Activated T-helper 1 cell treated with anti-CD3 and anti-CD28 coated beads, Interleukin-12 subunit alpha, Interleukin-12 subunit beta, Interleukin-2, Interleukin-4 antibody, amounts not matched to agents 30 ng/mL and 10 ng/mL and 1 ng/mL, durations not matched to agents 14 hours and 24 hours and 36 hours (primary cell): ENCODE measurements at regions of chr9 and their contacts with region 1.

Region 1: DNA sequence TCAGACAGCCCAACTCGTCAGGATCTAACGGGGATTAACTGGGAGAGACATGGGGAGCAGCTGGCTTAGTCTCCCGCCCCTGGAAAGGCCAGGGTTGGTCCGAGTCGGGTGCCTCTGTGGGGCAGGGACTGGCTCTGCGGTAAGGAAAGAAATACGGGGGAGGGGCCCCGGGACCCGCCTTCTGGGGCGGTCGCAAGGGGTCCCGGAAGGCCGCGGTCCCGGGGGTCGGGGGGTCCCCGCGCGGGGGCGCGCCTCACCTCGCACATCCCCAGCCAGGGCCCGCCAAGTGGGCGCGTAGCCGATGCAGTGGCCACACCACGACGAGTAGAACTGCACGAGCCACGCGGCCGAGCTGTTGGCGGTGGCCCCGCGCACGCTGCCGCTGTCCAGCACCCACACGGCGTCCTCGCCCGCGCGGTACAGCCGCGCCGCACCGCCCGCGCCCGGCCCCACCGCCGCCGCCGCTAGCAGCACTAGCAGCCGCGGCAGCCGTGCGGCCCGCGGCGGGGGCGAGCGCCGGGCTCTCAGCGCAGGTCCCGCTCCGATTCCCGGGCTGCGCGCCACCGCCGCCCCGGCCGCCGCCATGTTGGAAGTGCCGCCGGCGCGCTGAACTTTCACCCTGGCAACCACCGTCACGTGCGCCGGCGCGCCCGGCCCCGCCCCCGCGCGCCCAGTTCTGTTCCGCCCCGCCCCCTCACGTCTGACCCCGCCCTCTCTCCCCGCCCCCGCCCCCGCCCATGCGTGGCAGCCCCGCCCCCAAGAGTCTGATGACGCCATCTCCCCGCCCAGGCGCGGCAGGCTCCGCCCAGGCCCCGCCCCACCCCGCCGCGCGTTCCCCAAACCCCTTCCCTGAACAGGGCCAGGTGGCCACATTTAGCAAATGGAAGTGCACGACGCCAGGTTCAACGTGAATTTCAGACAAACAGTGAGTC is at the start of gene QSOX2:
- DNase-seq: peak; percentile 77
- H3K4me3 Mint-ChIP-seq: peak within 1 kb of the TSS; percentile 96
- H3K27ac Mint-ChIP-seq: peak within 1 kb of the TSS; percentile 96
- H3K4me1 Mint-ChIP-seq: peaks cover 24% of the 10 kb centered on the region
- H3K27me3 Mint-ChIP-seq: no peaks in the 10 kb centered on the region
- total RNA-seq, gene QSOX2: 27.9 and 28.6 TPM in 2 replicates

Region 2: GRCh38 chr9:135692410-135692809 is 553.1 kb before region 1 on chr9:
- intact Hi-C with region 1: no loop called
- DNase-seq: no peak
- H3K4me3 Mint-ChIP-seq: no peak overlapping the region
- H3K27ac Mint-ChIP-seq: no peak overlapping the region
- H3K4me1 Mint-ChIP-seq: no peaks in the 10 kb centered on the region
- H3K27me3 Mint-ChIP-seq: no peaks in the 10 kb centered on the region

Region 3: DNA sequence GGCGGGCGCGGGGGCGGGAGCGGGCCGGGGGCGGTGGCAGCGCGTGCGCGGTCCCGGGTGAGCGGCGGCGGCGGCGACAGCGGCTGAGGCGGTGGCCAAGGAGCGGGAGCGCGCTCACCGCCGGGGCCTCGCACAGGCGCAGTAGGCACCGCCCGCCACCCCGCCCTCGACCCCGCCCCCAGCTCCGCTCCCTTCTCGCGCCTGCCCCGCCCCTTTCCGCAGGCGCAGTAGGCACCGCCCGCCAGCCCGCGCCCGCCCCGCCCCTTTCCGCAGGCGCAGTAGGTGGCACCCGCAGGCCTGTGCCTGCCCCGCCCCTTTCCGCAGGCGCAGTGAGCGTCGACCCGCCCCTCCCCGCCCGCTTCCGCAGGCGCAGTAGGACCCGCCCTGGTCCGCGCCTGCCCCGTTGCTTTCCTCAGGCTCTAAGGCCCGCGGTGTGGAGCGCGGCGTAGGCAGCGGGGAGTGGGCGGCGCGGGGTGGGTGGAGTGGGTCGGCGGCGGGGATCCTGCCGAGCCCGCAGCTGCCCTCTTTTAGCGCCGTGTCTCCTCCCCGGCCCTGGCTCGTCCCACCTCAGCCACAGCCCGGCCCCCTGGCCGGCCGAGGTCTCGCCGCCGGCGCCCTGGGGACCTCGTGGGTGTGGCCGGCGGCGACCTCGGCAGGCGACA is 337.9 kb before region 1 on chr9 and contains the start of gene CAMSAP1:
- intact Hi-C with region 1: loop called (anchors 5 kb)
- DNase-seq: peak; percentile 91
- H3K4me3 Mint-ChIP-seq: peak within 1 kb of the TSS; percentile 90
- H3K27ac Mint-ChIP-seq: peak within 1 kb of the TSS; percentile 89
- H3K4me1 Mint-ChIP-seq: peaks cover 50% of the 10 kb centered on the region
- H3K27me3 Mint-ChIP-seq: no peaks in the 10 kb centered on the region
- total RNA-seq, gene CAMSAP1: 43.3 and 43.8 TPM in 2 replicates

Region 4: DNA sequence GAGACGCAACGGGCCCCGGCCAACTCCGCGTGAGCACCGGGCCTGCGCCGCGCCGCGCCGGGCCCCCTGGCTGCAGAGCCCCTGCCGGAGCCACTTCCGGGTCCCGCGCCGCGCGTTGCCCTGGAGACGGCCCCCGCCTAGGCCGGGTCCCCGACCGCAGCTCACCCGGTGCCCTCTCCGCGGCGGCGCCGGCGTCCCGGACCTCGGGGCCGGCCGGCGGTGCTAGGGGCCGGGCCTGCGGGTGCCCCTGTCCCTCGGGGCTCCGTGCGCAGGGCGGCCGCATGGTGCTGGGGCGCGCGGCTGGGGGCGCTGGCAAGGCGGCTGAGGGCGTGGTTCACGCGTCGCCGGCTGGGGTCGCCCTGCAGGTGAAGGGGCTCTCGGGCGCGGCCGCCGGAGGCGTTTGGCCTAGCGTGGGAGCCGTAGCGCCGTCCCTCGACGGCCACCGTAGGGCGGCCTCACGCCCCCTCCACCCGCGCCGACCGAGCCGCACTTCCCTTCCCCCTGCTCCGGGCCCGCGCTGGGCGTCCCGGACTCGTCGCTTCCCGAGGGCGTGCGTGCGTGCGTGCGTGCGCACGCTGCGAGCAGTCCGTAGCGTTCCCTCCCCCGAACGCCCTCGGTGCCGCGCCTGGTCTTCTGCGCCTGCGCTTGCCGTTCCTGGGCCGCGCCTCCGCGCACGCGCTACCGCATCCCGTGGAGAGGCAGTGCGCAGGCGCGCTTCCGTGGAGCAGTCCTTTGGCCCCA is 127.0 kb before region 1 on chr9 and contains the start of gene TMEM250:
- intact Hi-C with region 1: loop called (anchors 1 kb)
- DNase-seq: peak; percentile 96
- H3K4me3 Mint-ChIP-seq: peak within 1 kb of the TSS; percentile 82
- H3K27ac Mint-ChIP-seq: peak within 1 kb of the TSS; percentile 76
- H3K4me1 Mint-ChIP-seq: peaks cover 11% of the 10 kb centered on the region
- H3K27me3 Mint-ChIP-seq: no peaks in the 10 kb centered on the region
- total RNA-seq, gene TMEM250: 50.1 and 51.5 TPM in 2 replicates

Region 5: DNA sequence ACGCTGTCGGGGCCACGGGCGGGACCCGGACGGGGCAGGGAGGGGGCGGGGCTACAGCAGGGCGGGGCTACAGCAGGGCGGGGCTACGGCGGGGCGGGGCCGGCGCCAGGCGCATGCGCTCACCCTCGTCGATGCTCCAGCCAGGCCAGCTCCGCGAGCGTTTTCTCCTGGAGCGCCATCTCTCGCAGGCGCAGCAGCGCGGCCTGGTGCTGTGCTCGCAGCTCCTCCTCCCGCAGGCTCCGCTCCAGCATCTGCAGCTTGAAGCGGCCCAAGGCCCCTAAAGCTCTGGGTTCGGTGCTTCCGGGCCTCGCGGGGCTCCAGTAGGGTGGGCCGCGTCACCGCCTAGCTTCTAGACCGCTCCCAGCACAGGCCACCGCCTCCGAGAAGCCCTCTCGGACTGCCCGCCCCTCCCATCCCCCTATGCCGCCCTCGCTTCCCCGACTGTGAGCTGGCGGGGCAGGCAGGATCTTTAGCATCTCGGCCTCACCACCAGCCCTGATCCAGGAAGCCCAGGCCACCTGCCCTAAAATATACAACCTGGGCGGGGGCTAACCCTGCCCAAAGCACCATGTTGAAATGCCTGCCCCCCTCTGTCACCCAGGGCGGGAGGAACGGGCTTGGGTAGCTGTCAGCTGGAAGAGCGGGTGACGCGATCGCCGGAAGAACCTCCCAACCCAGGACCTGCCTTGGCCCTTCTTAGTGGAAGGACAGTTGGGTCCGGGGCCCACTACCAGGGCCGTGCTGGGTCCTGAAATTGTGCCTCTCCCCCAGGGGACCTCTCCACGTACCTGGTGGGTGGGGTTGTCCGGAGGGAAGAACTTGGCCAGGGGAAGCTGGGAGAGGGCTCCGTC is 22.0 kb after region 1 on chr9:
- intact Hi-C with region 1: loop called (anchors 1 kb)
- DNase-seq: peak; percentile 81
- H3K4me3 Mint-ChIP-seq: peak overlapping the region; percentile 83
- H3K27ac Mint-ChIP-seq: peak overlapping the region; percentile 70
- H3K4me1 Mint-ChIP-seq: peaks cover 6% of the 10 kb centered on the region
- H3K27me3 Mint-ChIP-seq: peaks cover 7% of the 10 kb centered on the region

Region 6: DNA sequence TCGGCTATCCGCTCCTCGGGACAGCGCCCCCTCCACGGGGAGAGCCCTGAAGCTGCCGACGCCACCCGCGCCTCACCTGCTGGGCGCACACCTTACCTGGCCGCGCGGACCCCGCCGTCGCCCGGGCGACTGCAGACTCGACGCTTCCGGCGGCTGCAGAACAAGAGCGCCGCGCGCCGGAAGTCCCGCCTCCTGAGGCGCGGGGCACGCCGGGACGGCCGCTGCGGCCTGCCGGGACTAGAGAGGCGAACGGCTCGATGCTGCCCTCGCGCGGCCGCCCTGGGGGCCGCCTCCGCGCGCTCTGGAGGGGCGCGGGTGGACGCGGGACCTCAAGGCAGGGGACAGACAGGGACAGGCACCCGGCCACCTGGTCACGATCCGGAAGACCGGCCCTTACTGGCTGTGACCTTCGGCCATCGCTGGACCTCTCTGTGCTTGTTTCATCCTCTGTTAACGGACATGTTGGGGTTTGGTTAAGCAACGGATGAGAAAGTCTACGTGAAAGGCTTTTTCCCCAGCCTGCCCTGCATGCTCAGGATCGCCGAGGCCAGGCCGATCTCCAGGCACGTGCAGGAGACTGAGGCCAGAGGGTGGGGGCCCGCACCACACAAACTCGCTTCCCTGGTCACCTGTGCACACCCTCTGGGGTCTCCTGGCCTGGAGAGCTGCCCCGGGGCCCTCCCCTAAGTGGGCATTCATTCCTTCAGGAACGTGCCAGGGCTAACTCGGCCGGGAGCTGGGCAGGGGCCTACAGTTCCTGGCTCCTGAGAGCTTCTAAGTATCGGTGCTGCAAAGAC is 154.8 kb after region 1 on chr9 and contains the start of gene SNAPC4:
- intact Hi-C with region 1: loop called (anchors 2 kb)
- DNase-seq: peak; percentile 86
- H3K4me3 Mint-ChIP-seq: peak within 1 kb of the TSS; percentile 91
- H3K27ac Mint-ChIP-seq: peak within 1 kb of the TSS; percentile 76
- H3K4me1 Mint-ChIP-seq: peaks cover 40% of the 10 kb centered on the region
- H3K27me3 Mint-ChIP-seq: no peaks in the 10 kb centered on the region
- total RNA-seq, gene SNAPC4: 26.7 TPM in 2 replicates

Region 7: DNA sequence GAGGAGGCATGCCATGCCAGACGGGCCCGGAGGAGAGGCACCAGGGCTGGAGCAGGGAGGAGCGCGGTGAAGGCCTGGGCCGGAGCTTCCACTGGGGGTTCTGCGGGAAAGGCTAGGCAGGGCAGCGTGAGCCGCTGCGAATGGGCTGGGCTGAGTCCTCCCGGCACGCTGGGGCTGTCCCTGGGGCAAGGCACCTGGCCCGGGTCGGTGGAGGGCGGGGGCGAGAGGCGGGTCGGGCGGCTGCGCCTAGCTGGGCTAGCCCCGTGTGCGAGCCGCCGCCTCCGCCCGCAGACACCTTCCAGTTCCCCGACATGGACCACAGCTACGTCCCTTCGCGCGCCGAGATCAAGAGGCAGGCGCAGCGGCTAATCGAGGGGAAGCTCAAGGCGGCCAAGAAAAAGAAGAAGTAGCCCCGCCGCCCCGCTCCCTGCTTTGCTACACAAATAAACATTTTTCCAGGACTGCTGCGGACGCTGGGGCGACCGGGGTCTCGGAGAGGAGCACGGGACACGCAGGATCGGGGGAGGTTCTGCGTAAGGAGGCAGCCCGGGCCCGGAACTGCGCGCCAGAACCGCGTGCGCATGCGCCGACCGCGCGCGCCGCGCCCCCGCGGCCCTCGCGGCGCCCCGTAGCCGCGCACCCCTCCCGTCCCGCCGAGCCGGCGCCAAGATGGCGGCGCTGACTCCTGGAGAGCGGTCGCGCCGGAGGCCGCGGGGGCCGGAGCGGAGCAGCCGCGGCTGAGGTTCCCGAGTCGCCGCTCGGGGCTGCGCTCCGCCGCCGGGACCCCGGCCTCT is 562.0 kb after region 1 on chr9 and contains the start of gene RABL6:
- intact Hi-C with region 1: loop called (anchors 10 kb)
- DNase-seq: peak; percentile 82
- H3K4me3 Mint-ChIP-seq: peak within 1 kb of the TSS; percentile 85
- H3K27ac Mint-ChIP-seq: peak within 1 kb of the TSS; percentile 90
- H3K4me1 Mint-ChIP-seq: peaks cover 28% of the 10 kb centered on the region
- H3K27me3 Mint-ChIP-seq: peaks cover 4% of the 10 kb centered on the region
- total RNA-seq, gene RABL6: 109 and 114 TPM in 2 replicates